ENCODE measurements at regions of chr3 and their contacts with region 1.

Region 1: GRCh38 chr3:31275038-31275562 is 257.6 kb upstream of the STT3B start:
- DNase-seq: peak; percentile 29 to 83
- H3K4me3 ChIP-seq: peak overlapping the region; percentile 32; the same call in 1 of the 2 replicates
- H3K27ac ChIP-seq: peak overlapping the region; percentile 83
- H3K4me1 ChIP-seq: peaks cover 42% of the 10 kb centered on the region
- H3K27me3 ChIP-seq: no peaks in the 10 kb centered on the region
- CTCF ChIP-seq: no peak

Region 2: GRCh38 chr3:30945291-30945690 is 329.8 kb before region 1 on chr3:
- CTCF ChIA-PET with region 1: no interaction called
- POLR2A ChIA-PET with region 1: no interaction called
- intact Hi-C with region 1: no loop called
- DNase-seq: no peak
- H3K4me3 ChIP-seq: no peak overlapping the region
- H3K27ac ChIP-seq: no peak overlapping the region
- H3K4me1 ChIP-seq: no peaks in the 10 kb centered on the region
- H3K27me3 ChIP-seq: no peaks in the 10 kb centered on the region
- CTCF ChIP-seq: no peak

Region 3: GRCh38 chr3:31041161-31041978 is 233.7 kb before region 1 on chr3:
- CTCF ChIA-PET with region 1: no interaction called
- POLR2A ChIA-PET with region 1: no interaction called
- intact Hi-C with region 1: loop called (anchors 1 kb)
- DNase-seq: peak; percentile 77 to 96
- H3K4me3 ChIP-seq: no peak overlapping the region
- H3K27ac ChIP-seq: peak overlapping the region; percentile 51
- H3K4me1 ChIP-seq: peaks cover 14% of the 10 kb centered on the region
- H3K27me3 ChIP-seq: no peaks in the 10 kb centered on the region
- CTCF ChIP-seq: no peak

Region 4: DNA sequence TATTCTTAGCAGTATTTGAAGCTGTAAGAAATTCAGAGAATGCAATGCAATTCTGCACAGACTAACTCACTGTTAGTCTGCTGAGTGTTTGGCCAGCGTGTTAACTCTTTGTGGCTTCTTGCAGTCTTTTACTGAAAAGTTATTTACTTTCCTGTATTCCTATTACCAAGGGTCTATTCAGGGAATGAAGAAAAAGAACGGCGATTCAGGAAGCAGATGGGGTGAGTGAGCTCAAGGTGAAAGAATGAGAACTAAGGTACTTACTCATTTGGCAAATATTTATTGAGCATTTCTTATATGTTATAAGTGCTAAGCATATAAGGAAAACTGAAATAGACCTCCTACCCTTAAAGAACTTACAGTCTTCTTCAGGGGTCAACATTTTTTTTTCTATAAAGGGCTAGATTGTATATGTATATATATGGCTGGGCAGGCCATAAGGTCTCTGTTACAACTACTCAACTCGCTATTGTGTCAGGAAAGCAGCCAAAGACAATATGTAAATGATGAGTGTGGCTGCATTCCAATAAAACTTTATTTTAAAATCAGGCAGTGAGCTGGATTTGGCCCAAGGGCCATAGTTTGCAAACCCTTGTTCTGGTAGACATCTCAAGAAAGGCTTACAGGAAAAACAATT is 108.7 kb before region 1 on chr3:
- CTCF ChIA-PET with region 1: no interaction called
- POLR2A ChIA-PET with region 1: no interaction called
- intact Hi-C with region 1: loop called (anchors 1 kb)
- DNase-seq: peak; percentile 35 to 83
- H3K4me3 ChIP-seq: no peak overlapping the region
- H3K27ac ChIP-seq: peak overlapping the region; percentile 57
- H3K4me1 ChIP-seq: peaks cover 20% of the 10 kb centered on the region
- H3K27me3 ChIP-seq: no peaks in the 10 kb centered on the region
- CTCF ChIP-seq: no peak

Region 5: DNA sequence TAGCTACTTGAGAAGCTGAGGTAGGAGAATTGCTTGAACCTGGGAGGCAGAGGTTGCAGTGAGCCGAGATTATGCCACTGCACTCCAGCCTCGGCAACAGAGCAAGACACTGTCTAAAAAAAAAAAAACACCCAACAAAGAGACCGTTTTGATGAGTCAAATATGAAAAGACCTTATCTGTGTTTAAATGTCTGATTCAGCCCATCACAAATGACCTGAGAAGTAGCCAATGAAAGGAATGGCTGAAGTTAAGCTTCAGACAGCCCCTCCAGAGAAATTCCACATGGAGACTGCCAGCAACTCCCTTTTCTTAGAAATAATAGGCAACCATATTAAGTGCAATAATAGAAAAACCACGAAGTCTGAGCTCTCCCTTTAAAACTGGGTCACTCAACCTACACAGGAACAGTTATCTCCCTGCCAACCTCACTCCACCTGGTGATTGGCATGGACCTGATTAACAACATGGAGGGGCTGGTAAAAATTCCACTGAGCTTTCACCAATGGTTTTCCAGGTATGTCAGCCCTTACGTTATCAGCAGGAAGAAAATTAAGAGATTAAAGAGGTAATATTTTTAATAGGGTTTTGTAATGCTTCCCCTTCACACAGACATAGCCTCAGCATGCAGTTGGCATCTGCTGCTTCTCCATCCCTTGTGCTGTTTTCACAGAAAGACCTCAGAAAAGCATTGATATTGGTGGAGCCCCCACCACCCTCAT is 19.5 kb after region 1 on chr3:
- CTCF ChIA-PET with region 1: no interaction called
- POLR2A ChIA-PET with region 1: no interaction called
- intact Hi-C with region 1: no loop called
- DNase-seq: no peak
- H3K4me3 ChIP-seq: no peak overlapping the region
- H3K27ac ChIP-seq: no peak overlapping the region
- H3K4me1 ChIP-seq: peaks cover 20% of the 10 kb centered on the region
- H3K27me3 ChIP-seq: no peaks in the 10 kb centered on the region
- CTCF ChIP-seq: no peak

Region 6: DNA sequence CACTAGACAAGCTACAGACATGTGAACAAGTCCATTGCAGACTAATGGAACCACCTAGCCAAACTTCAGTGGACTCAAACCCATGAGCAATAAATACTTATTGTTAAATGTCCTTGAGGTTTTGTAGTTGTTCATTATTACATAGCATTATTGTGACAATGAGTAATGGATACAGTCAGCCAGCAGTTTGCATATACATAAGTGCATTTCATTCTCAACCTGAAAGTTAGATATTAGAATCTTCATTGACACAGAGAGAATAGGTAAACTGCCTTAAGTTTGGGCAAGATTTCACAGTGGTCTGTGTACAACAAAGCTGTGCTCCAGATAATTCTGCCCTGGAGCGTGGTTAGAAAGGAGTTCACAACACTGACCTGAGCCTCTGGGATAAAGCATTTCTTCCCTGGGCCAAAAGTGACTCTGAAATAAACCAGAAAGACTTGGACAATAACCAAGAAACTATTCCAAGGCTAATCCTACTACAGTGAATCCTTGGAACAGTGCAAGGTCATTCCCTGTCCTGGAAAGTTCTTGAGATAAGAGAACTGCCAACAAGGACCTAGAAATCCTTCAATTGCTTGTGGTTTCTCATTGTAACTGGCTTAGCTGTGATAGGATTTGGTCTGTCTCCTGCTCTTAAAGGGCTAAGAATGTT is 32.2 kb after region 1 on chr3:
- CTCF ChIA-PET with region 1: no interaction called
- POLR2A ChIA-PET with region 1: no interaction called
- intact Hi-C with region 1: loop called (anchors 1 kb)
- DNase-seq: no peak
- H3K4me3 ChIP-seq: no peak overlapping the region
- H3K27ac ChIP-seq: no peak overlapping the region
- H3K4me1 ChIP-seq: peaks cover 9% of the 10 kb centered on the region
- H3K27me3 ChIP-seq: no peaks in the 10 kb centered on the region
- CTCF ChIP-seq: no peak

Region 7: DNA sequence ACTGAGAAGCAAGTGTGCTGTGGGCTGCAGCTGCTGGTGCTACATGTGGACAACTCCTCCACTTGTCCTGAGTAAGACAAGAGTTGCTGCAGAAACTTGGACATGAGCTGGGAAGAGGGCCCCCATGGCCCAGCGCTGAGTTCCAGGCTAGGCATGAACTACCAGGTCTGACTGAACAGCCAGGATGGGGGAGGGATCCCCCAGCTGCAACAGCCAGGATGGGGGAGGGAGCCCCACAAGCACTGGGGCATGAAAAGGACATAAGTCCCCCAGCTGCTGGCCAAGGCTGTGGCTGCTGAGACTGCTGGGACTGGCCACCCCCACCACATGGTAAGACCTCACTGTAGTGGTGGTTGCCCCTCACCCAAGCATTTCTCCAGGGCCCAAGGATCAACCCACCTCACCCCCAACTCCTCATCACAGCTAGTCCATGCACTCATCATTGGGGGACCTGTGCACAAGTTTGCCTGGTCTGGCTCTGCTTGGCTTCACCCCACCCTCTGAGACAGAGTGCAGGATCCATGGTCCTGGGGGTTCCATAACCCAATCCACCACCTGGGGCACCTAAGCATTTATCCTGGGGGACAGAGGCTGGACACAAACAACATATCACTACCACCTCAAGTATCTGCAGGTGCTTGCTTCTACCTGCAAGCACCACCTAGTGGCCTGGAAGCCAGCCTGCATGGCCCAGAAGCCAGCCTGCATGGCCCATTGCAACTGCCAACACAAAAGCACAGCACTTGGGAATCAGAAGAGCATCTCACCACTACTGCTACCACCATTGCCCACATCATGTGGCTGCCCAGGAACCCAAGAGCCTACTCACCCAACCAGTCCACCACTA is 173.2 kb after region 1 on chr3:
- CTCF ChIA-PET with region 1: no interaction called
- POLR2A ChIA-PET with region 1: no interaction called
- intact Hi-C with region 1: loop called (anchors 10 kb)
- DNase-seq: no peak
- H3K4me3 ChIP-seq: no peak overlapping the region
- H3K27ac ChIP-seq: no peak overlapping the region
- H3K4me1 ChIP-seq: peaks cover 18% of the 10 kb centered on the region
- H3K27me3 ChIP-seq: no peaks in the 10 kb centered on the region
- CTCF ChIP-seq: peak; percentile 51; the same call in 1 of the 2 replicates